Lower leg skin (tissue), 4 donors: ENCODE measurements at regions of chr12 and their contacts with region 1.

Region 1: GRCh38 chr12:27619308-27619707 is 76.9 kb upstream of the REP15 start:
- DNase-seq: no peak
- H3K4me3 ChIP-seq: no peak overlapping the region
- CTCF ChIP-seq: no peak
- POLR2A ChIP-seq: no peak

Region 2: GRCh38 chr12:27523642-27524493 is 95.4 kb before region 1 on chr12 and contains the start of gene PPFIBP1:
- intact Hi-C with region 1: loop called (anchors 10 kb)
- DNase-seq: peak; percentile 99 to 100
- H3K4me3 ChIP-seq: peak within 1 kb of the TSS; percentile 47
- CTCF ChIP-seq: no peak
- POLR2A ChIP-seq: no peak
- total RNA-seq, gene PPFIBP1: 47.2 to 77.3 (median 52.7) TPM

Region 3: GRCh38 chr12:27840244-27840999 is 221.1 kb after region 1 on chr12:
- intact Hi-C with region 1: no loop called
- DNase-seq: no peak
- H3K4me3 ChIP-seq: no peak overlapping the region
- CTCF ChIP-seq: no peak
- POLR2A ChIP-seq: no peak